ENCODE measurements at regions of chr7 and their contacts with region 1.

Region 1: GRCh38 chr7:22559829-22560489 is 60.0 kb upstream of the STEAP1B start:
- DNase-seq: peak; percentile 55
- H3K4me3 Mint-ChIP-seq: no peak overlapping the region
- H3K27ac Mint-ChIP-seq: no peak overlapping the region
- H3K4me1 Mint-ChIP-seq: peaks cover 44% of the 10 kb centered on the region
- H3K27me3 Mint-ChIP-seq: peaks cover 9% of the 10 kb centered on the region

Region 2: DNA sequence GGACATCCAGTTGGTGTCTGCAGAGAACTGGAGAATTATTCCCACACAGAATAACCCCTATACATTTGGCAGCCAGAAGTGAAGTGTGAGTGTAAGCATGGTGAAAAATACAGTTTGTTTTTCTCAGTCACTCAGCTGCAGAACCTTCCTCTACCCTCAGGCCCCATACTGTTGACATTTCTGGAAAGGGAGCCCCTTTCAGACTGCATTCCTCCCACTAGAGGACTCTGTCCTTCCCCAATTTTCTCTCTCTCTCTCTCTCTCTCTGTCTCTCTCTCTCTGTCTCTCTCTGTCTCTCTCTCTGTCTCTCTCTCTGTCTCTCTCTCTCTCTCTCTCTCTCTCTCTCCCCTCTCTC is 26.8 kb after region 1 on chr7:
- intact Hi-C with region 1: loop called (anchors 1 kb)
- DNase-seq: no peak
- H3K4me3 Mint-ChIP-seq: no peak overlapping the region
- H3K27ac Mint-ChIP-seq: no peak overlapping the region
- H3K4me1 Mint-ChIP-seq: peaks cover 9% of the 10 kb centered on the region
- H3K27me3 Mint-ChIP-seq: peaks cover 43% of the 10 kb centered on the region

Region 3: GRCh38 chr7:22662036-22662435 is 102.1 kb after region 1 on chr7:
- intact Hi-C with region 1: loop called (anchors 1 kb)
- DNase-seq: no peak
- H3K4me3 Mint-ChIP-seq: no peak overlapping the region
- H3K27ac Mint-ChIP-seq: peak overlapping the region; percentile 69
- H3K4me1 Mint-ChIP-seq: peaks cover 39% of the 10 kb centered on the region
- H3K27me3 Mint-ChIP-seq: peaks cover 14% of the 10 kb centered on the region

Region 4: GRCh38 chr7:22782616-22783232 is 222.8 kb after region 1 on chr7:
- intact Hi-C with region 1: loop called (anchors 1 kb)
- DNase-seq: peak; percentile 57
- H3K4me3 Mint-ChIP-seq: no peak overlapping the region
- H3K27ac Mint-ChIP-seq: no peak overlapping the region
- H3K4me1 Mint-ChIP-seq: no peaks in the 10 kb centered on the region
- H3K27me3 Mint-ChIP-seq: peaks cover 8% of the 10 kb centered on the region